ENCODE measurements at regions of chr9 and their contacts with region 1.

Region 1: DNA sequence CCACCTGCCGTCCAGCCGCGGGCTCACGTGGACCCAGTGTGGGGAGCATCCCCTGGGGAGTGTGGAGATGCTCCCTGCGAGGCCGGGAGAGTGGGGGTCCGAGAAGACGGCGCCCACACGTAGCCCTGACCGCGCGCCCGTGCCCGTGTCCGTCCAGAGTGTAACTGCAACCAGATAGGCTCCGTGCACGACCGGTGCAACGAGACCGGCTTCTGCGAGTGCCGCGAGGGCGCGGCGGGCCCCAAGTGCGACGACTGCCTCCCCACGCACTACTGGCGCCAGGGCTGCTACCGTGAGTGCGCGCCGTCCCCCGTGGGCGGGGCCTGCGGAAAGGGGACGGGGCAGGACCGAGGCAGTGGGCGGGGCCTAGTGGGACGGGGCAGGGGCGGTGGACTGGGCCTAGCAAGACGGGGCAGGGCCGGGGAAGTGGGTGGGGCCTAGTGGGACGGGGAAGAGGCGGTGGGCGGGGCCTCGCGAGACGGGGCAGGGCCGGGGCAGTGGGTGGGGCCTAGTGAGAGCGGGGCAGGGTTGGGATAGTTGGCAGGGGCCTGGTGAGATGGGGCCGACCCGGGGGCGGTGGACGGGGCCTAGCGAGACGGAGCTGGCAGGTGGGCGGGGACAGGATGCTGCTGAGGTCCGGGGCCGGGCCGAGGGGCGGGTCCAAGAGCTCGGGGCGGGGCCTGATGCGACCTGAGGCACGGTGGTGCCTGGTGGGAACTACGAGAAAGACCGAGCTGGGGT is 79.1 kb downstream of the NTNG2 start:
- DNase-seq: peak; percentile 100
- ATAC-seq: peak; percentile 95
- H3K4me3 Mint-ChIP-seq: peak overlapping the region; percentile 87
- H3K27ac Mint-ChIP-seq: peak overlapping the region; percentile 91
- H3K4me1 Mint-ChIP-seq: peaks cover 10% of the 10 kb centered on the region
- H3K27me3 Mint-ChIP-seq: peaks cover 2% of the 10 kb centered on the region

Region 2: DNA sequence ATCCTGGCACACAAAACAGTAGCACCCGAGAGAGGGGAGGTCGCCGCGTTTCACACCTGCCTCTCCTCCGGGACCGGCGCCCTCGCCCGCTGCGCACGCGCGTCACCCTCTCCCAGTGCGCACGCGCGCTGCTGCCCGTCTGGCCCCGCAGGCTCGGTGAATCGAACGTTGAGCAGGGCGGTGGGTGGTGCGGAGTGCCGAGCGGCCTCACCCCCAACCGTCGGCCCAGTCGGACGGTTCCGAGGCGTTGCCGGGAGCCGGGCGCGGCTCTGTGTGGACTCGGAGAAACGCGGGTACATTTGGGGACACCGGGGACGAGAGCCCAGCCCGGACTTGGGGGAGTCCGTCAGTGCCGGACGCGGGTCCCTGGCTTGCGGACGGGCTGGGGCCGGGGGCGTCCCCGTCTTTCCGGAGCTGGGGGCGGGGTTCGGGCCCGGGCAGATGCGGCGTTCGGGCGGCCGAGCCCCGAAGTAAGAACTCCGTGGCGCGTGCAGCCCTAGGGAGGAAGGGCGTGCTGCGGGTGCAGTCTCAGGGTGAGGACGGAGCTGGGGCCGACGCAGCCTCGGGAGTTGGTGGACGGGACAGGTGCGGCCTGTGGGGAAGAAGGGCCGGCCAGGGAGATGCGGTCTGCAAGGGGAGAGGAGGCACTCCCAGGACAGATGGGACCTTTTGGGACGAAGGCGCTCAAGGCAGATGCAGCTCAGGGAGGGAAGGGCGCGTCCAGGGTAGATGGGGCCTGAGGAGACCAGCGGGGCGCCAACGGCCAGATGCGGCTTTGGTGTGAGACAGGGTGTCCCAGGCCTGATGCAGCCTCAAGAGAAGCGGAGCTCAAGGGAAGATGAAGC is 737.9 kb before region 1 on chr9 and contains the start of gene POMT1:
- CTCF ChIA-PET with region 1: interaction called, 3 read pairs
- POLR2A ChIA-PET with region 1: no interaction called
- intact Hi-C with region 1: loop called in 1 of 2 experiments (anchors 5 kb)
- DNase-seq: peak; percentile 94
- ATAC-seq: peak; percentile 42
- H3K4me3 Mint-ChIP-seq: peak within 1 kb of the TSS; percentile 83
- H3K27ac Mint-ChIP-seq: peak within 1 kb of the TSS; percentile 84
- H3K4me1 Mint-ChIP-seq: peaks cover 53% of the 10 kb centered on the region
- H3K27me3 Mint-ChIP-seq: no peaks in the 10 kb centered on the region
- total RNA-seq, gene POMT1: 28.2 to 30.7 TPM

Region 3: DNA sequence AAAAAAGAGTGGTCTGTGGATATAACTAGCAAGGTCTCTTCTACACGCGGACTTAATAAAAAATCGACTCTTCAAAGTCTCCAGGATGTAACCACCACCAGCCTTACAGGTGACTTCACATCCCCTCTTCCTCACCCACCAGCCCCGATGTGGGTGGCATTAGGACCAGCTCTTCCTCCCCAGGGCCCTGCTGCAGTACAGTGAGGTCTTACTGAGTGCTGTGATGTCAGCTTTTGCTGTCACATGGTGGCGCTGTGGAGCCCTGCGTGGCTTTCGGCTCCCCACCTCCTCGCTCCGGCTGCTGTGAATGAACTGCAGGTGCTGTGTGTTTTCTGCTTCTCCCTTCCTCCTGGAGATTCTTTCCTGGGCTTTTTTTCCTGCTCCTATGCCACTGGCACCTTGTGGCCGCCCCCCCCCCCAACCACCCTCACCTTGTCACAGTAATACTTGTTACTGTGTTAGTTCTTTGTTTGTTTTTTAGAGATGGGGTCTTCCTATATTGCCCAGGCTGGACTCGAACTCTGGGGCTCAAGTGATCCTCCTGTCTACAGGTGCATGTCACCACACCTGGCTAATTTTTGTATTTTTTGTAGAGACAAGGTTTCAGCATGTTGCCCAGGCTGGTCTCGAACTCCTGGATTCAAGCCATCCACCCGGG is 485.3 kb before region 1 on chr9:
- CTCF ChIA-PET with region 1: interaction called, 19 read pairs
- POLR2A ChIA-PET with region 1: no interaction called
- intact Hi-C with region 1: loop called in 1 of 2 experiments (anchors 1 kb)
- DNase-seq: peak; percentile 95
- ATAC-seq: peak; percentile 98
- H3K4me3 Mint-ChIP-seq: no peak overlapping the region
- H3K27ac Mint-ChIP-seq: peak overlapping the region; percentile 29
- H3K4me1 Mint-ChIP-seq: peaks cover 21% of the 10 kb centered on the region
- H3K27me3 Mint-ChIP-seq: peaks cover 5% of the 10 kb centered on the region

Region 4: GRCh38 chr9:132006677-132007370 is 234.1 kb before region 1 on chr9:
- CTCF ChIA-PET with region 1: no interaction called
- POLR2A ChIA-PET with region 1: no interaction called
- intact Hi-C with region 1: loop called in 1 of 2 experiments (anchors 5 kb)
- DNase-seq: peak; percentile 65
- ATAC-seq: peak; percentile 98
- H3K4me3 Mint-ChIP-seq: no peak overlapping the region
- H3K27ac Mint-ChIP-seq: no peak overlapping the region
- H3K4me1 Mint-ChIP-seq: peaks cover 28% of the 10 kb centered on the region
- H3K27me3 Mint-ChIP-seq: no peaks in the 10 kb centered on the region

Region 5: DNA sequence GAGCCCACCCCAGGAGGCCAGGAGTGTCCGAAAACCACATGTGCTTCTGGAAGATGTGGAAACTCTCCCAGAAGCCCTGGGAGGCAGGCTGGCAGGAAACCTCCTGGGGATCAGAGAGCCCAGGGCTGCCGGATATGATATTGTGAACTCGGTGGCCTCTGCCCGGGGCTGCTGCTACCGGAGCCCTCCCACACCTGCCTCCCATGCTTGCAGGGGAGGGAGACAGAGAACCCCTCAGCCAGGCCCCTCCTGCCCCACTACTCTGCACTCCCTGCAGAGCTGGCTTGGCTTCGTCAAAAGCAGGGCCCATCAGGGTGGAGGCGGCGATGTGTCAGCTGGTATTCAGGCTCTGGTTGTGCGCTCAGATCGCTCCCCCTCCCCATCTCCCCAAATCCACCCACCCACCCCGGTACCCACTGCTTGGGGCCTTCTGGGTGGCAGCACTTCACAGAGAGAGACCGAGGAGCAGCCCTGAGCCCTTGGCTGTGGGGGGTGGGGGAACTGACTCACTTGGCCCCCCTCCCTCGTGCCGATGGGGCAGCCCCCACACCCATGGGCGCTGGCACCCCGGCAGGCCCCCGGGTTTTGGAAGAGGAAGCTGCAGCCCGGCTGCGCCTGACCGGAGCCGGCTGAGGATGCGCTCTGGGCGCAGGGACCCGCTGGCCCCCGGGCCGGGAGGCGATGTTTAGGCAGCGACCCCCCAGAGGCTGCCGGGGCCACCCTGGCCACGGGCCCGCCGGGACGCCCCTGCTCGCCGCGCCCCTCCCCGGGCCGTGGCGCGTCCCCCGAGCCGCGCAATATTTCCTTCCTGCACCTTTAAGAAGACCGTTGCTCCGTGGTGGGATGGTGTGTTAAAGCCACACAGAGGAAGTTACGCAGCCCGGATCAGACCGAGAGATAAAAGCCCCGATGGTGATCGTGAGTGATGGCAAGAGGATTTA is 79.9 kb before region 1 on chr9:
- CTCF ChIA-PET with region 1: interaction called, 4 read pairs
- POLR2A ChIA-PET with region 1: no interaction called
- intact Hi-C with region 1: loop called in 1 of 2 experiments (anchors 2 kb)
- DNase-seq: peak; percentile 70
- ATAC-seq: peak; percentile 67
- H3K4me3 Mint-ChIP-seq: peak overlapping the region; percentile 78
- H3K27ac Mint-ChIP-seq: no peak overlapping the region
- H3K4me1 Mint-ChIP-seq: peaks cover 4% of the 10 kb centered on the region
- H3K27me3 Mint-ChIP-seq: peaks cover 33% of the 10 kb centered on the region

Region 6: GRCh38 chr9:132260846-132261245 is 19.9 kb after region 1 on chr9:
- CTCF ChIA-PET with region 1: interaction called, 24 read pairs
- POLR2A ChIA-PET with region 1: no interaction called
- intact Hi-C with region 1: loop called in 1 of 2 experiments (anchors 1 kb)
- DNase-seq: no peak
- ATAC-seq: no peak
- H3K4me3 Mint-ChIP-seq: no peak overlapping the region
- H3K27ac Mint-ChIP-seq: no peak overlapping the region
- H3K4me1 Mint-ChIP-seq: peaks cover 8% of the 10 kb centered on the region
- H3K27me3 Mint-ChIP-seq: no peaks in the 10 kb centered on the region

Region 7: DNA sequence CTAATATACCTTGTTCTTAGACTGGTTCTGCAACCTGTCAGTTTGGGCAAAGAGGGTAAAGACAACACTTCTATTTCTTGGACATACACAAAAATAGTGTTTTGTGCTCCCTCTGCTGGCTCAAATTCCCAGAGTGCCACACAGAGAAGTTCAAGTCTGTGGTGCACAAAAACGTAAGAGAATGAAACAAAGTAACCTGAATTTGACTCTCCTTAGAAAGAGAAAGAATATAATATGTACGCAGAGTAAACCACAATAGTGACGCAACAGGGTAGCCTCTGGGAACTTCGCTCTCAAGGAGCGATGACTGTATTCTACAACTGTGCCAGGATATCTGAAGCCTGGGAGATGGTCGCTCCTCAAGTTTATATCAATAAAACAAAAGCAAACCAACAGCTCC is 410.3 kb after region 1 on chr9:
- CTCF ChIA-PET with region 1: no interaction called
- POLR2A ChIA-PET with region 1: no interaction called
- intact Hi-C with region 1: no loop called
- DNase-seq: peak; percentile 18
- ATAC-seq: no peak
- H3K4me3 Mint-ChIP-seq: no peak overlapping the region
- H3K27ac Mint-ChIP-seq: no peak overlapping the region
- H3K4me1 Mint-ChIP-seq: peaks cover 10% of the 10 kb centered on the region
- H3K27me3 Mint-ChIP-seq: no peaks in the 10 kb centered on the region

Region 8: GRCh38 chr9:132669698-132670456 is 429.0 kb after region 1 on chr9 and contains the start of gene DDX31:
- CTCF ChIA-PET with region 1: no interaction called
- POLR2A ChIA-PET with region 1: no interaction called
- intact Hi-C with region 1: loop called in 1 of 2 experiments (anchors 1 kb)
- DNase-seq: peak; percentile 91
- ATAC-seq: peak; percentile 86
- H3K4me3 Mint-ChIP-seq: peak within 1 kb of the TSS; percentile 89
- H3K27ac Mint-ChIP-seq: peak within 1 kb of the TSS; percentile 90
- H3K4me1 Mint-ChIP-seq: peaks cover 49% of the 10 kb centered on the region
- H3K27me3 Mint-ChIP-seq: no peaks in the 10 kb centered on the region
- total RNA-seq, gene DDX31: 20.9 to 21.0 TPM

Measured in activated CD4-positive, alpha-beta T cell treated with anti-CD3 and anti-CD28 coated beads for 36 hours (primary cell).